ENCODE measurements at regions of chr3 and their contacts with region 1.

Region 1: DNA sequence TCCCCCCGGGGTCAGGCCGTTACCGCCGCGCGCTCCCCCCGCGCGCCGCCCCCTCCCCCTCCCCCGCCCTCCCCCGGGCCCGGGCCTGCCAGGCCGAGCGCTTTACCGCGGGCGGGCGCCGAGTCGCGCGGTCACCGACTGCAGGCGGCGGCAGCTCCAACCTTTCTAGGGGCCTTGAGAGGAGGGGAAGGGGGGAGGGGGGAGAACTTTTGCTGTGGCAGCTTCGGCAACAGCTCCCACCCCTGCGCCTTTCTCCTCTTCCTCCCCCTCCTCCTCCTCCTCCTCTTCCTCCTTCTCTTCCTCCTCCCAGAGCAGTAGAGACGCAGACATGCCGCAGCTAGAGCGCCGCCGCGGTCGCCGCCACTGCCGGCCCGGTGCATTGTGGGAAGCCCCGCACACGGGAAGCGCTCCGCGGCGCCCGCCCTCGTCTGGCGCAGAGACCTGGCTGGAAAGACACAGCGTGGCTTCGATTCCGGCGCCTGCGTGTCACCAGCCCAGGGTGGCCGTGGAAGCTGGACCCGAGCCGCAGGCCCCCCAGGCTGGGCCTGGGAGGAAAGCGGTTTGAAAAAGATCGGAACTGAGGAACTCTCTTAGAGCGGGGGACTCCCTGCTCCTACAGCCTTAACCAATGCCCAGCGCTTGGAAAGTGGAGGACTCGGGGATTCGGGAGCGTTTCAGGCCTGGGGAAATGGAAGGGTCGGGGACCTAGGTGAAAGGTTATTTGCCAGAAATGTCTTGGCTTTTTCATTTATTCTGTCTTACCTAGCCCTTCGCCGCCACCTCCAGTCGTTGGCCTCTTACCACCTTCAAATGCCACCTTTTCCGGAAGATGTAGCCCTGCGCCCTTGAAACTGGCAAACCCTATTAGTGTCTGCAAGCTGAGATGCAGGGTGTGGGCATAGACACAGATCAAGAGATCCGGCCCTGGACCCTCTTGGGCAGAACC is at the start of gene ZNF148:
- DNase-seq: peak; percentile 88 to 92 (median 91)
- ATAC-seq: peak; percentile 98
- H3K4me3 ChIP-seq: peak within 1 kb of the TSS; percentile 72 to 93
- H3K27ac ChIP-seq: peak within 1 kb of the TSS; percentile 88 to 94 (median 90)
- H3K4me1 ChIP-seq: peaks cover 21% of the 10 kb centered on the region
- H3K27me3 ChIP-seq: no peaks in the 10 kb centered on the region
- CTCF ChIP-seq: peak in 2 of 7 experiments; percentile 26 to 39
- POLR2A ChIP-seq: peak; percentile 81 to 90 (median 89)
- total RNA-seq, gene ZNF148: 12.5 to 15.0 TPM

Region 2: DNA sequence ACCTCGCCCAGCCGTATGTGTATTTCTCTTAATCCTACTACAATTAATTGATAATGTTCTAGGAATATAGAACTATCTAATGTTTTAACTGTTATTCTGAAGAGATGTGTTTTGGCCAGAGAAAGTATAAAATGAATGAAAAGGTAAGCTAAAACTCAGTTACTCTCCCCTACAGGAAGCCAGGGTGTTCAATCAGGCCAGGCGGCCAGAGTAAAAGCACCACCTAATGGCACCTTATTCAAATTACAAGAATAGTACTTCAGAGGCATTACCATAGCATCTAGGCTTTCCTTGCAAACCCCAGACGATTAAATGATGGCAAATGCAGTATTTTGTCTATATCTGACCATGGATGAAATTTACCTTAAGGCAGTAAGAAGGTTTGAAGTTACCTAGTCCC is 173.1 kb before region 1 on chr3:
- intact Hi-C with region 1: loop called (anchors 10 kb)
- DNase-seq: no peak
- ATAC-seq: no peak
- H3K4me3 ChIP-seq: no peak overlapping the region
- H3K27ac ChIP-seq: no peak overlapping the region
- H3K4me1 ChIP-seq: peaks cover 10% of the 10 kb centered on the region
- H3K27me3 ChIP-seq: no peaks in the 10 kb centered on the region
- CTCF ChIP-seq: peak in 1 of 7 experiments; percentile 4
- POLR2A ChIP-seq: no peak

Region 3: GRCh38 chr3:125334675-125335560 is 40.4 kb before region 1 on chr3:
- intact Hi-C with region 1: no loop called
- DNase-seq: no peak
- ATAC-seq: peak; percentile 18
- H3K4me3 ChIP-seq: no peak overlapping the region
- H3K27ac ChIP-seq: peak overlapping the region in 2 of 4 donors; percentile 2 to 16
- H3K4me1 ChIP-seq: peaks cover 31% of the 10 kb centered on the region
- H3K27me3 ChIP-seq: no peaks in the 10 kb centered on the region
- CTCF ChIP-seq: no peak
- POLR2A ChIP-seq: no peak